Psoas muscle (tissue), 8 donors: ENCODE measurements at regions of chr2 and their contacts with region 1.

Region 1: GRCh38 chr2:188369365-188369764 is 77.7 kb downstream of the GULP1 start:
- DNase-seq: no peak
- ATAC-seq: peak; percentile 66 to 93 (median 74)
- H3K4me3 ChIP-seq: no peak overlapping the region
- H3K27ac ChIP-seq: no peak overlapping the region
- H3K4me1 ChIP-seq: no peaks in the 10 kb centered on the region
- H3K27me3 ChIP-seq: no peaks in the 10 kb centered on the region
- CTCF ChIP-seq: peak; percentile 77

Region 2: DNA sequence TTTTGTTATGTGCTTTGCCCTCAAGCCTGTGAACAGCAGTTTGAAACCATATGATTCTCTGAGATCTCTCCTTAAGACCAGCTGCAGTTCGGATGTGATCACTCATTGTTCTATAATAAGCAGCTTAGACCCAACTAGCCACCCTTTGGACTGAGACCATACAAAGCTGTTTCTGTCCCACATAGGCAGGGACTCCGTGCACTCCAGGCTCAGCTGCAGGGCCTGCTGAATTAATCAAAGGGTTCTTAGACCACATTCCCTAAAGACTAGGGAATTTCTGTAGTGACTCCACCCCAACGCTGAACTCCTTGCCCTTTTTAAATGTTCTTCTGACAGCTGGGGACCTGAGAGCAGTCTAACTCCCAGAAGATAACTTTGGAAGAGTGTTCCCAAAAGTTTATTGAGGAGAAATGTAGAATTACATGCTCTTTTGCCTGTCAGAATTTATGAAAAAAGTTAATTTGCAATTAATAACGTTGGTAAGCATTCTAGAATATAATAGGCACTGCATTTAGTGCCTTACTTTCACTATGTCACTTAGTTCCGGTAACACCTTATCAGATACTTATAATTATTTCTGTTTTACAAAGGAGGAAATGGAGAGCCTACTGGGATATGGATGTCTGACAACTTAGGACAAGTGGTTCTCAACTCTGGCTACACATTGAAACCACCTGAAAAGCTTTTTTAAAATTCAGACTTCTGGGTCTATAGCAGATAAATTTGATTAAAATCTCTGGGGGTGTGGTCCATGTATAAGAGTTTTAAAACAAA is 35.4 kb before region 1 on chr2:
- intact Hi-C with region 1: loop called in 1 of 2 experiments (anchors 5 kb)
- DNase-seq: peak in 1 of 2 donors; percentile 13
- ATAC-seq: peak; percentile 93 to 99 (median 96)
- H3K4me3 ChIP-seq: peak overlapping the region; percentile 33
- H3K27ac ChIP-seq: peak overlapping the region; percentile 76
- H3K4me1 ChIP-seq: peaks cover 30% of the 10 kb centered on the region
- H3K27me3 ChIP-seq: no peaks in the 10 kb centered on the region
- CTCF ChIP-seq: no peak

Region 3: GRCh38 chr2:188353282-188353681 is 16.1 kb before region 1 on chr2:
- intact Hi-C with region 1: no loop called
- DNase-seq: no peak
- ATAC-seq: no peak
- H3K4me3 ChIP-seq: no peak overlapping the region
- H3K27ac ChIP-seq: no peak overlapping the region
- H3K4me1 ChIP-seq: peaks cover 7% of the 10 kb centered on the region
- H3K27me3 ChIP-seq: no peaks in the 10 kb centered on the region
- CTCF ChIP-seq: no peak